ENCODE measurements at regions of chr19 and their contacts with region 1.

Region 1: GRCh38 chr19:40716655-40717324 is at the starts of genes COQ8B and ITPKC:
- DNase-seq: peak; percentile 99 to 100 (median 100)
- H3K4me3 ChIP-seq: peak within 1 kb of the TSS; percentile 86
- H3K27ac ChIP-seq: peak within 1 kb of the TSS; percentile 95 to 96
- H3K4me1 ChIP-seq: peaks cover 12% of the 10 kb centered on the region
- H3K27me3 ChIP-seq: no peaks in the 10 kb centered on the region
- CTCF ChIP-seq: peak in 2 of 3 donors; percentile 58 to 73
- EP300 ChIP-seq: peak; percentile 54
- POLR2A ChIP-seq: peak; percentile 89
- total RNA-seq, gene COQ8B: 24.0 to 51.2 (median 42.5) TPM
- total RNA-seq, gene ITPKC: 14.2 to 117 (median 22.4) TPM

Region 2: GRCh38 chr19:40806488-40807468 is 90.0 kb after region 1 on chr19:
- intact Hi-C with region 1: loop called in 2 of 4 experiments (anchors 10 kb)
- DNase-seq: peak; percentile 72 to 86 (median 83)
- H3K4me3 ChIP-seq: no peak overlapping the region
- H3K27ac ChIP-seq: peak overlapping the region; percentile 27 to 39
- H3K4me1 ChIP-seq: peaks cover 41% of the 10 kb centered on the region
- H3K27me3 ChIP-seq: no peaks in the 10 kb centered on the region
- CTCF ChIP-seq: peak; percentile 55 to 84 (median 64)
- EP300 ChIP-seq: peak; percentile 48
- POLR2A ChIP-seq: peak; percentile 16

Region 3: DNA sequence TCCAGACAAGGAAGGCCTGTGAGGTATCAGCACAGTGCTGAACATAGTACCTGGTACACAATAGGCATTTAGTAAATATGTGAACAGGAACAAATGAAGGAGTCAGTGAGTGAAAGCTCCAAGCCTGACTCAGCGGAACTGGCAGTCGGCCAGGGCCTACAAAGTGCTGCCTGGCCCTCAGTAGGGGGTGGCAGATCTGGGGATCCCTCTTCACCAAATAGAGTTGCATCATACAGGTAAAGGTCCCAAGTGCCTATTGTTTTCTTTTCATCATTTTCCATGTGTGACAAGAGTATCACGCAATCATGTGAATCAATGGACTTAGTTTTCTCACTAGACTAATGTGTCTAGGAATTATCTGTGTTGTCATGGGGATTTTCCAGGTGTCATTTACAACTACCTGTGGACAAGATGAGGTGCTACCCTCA is 283.5 kb after region 1 on chr19:
- intact Hi-C with region 1: no loop called
- DNase-seq: no peak
- H3K4me3 ChIP-seq: no peak overlapping the region
- H3K27ac ChIP-seq: no peak overlapping the region
- H3K4me1 ChIP-seq: no peaks in the 10 kb centered on the region
- H3K27me3 ChIP-seq: no peaks in the 10 kb centered on the region
- CTCF ChIP-seq: no peak
- EP300 ChIP-seq: no peak
- POLR2A ChIP-seq: no peak